WTC11 (cell line): ENCODE measurements at regions of chr14 and their contacts with region 1.

Region 1: GRCh38 chr14:100428727-100429126 is 105.6 kb downstream of the SLC25A47 start:
- DNase-seq: no peak
- ATAC-seq: no peak
- H3K4me3 Mint-ChIP-seq: no peak overlapping the region
- H3K27ac Mint-ChIP-seq: no peak overlapping the region
- H3K4me1 Mint-ChIP-seq: peaks cover 17% of the 10 kb centered on the region
- H3K27me3 Mint-ChIP-seq: no peaks in the 10 kb centered on the region
- CTCF ChIP-seq: no peak

Region 2: GRCh38 chr14:100187247-100187833 is 241.4 kb before region 1 on chr14:
- CTCF ChIA-PET with region 1: no interaction called
- POLR2A ChIA-PET with region 1: no interaction called
- DNase-seq: no peak
- ATAC-seq: peak; percentile 28; the same call in 1 of the 2 replicates
- H3K4me3 Mint-ChIP-seq: no peak overlapping the region
- H3K27ac Mint-ChIP-seq: no peak overlapping the region
- H3K4me1 Mint-ChIP-seq: no peaks in the 10 kb centered on the region
- H3K27me3 Mint-ChIP-seq: no peaks in the 10 kb centered on the region; the same call in 1 of the 2 replicates
- CTCF ChIP-seq: no peak

Region 3: DNA sequence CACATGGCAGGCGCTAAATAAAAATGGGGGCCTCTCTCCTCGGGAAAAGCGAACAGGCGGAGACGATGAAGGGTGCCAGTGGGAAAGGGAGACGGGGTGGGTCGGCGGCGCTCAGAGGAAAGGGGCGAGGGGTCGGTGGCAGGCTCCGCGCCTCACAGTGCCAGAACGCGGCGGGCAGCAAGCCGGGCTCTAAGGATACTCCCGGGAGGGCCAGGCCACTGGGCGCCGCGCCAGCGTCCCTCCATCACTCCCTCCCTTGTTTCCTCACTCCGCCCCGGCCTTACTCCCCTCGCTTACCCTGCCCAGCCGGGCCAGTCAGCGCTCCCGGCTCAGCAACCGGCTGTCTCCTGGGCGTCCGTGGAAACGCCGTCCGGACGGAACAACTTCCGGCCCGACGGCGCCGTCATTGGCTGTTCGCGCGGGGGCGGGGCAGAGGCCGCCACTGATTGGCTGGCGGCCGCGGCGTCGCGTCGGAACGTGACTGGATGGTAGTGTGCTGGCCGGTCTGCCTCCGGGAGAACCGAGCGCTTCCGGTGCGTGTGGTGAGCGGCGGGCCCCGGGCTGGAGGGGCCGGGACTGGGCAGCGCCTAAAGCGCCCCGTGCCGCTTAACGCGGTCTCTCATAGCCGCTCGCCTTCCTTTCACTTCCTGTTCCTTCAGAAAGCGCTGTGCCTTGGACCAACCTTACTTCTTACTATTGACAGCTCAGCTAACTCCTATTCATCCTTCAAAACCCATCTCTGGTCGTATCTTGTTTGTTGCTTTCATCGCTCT is 52.6 kb before region 1 on chr14:
- CTCF ChIA-PET with region 1: no interaction called
- POLR2A ChIA-PET with region 1: no interaction called
- DNase-seq: peak; percentile 94
- ATAC-seq: peak; percentile 88
- H3K4me3 Mint-ChIP-seq: peak within 1 kb of the TSS; percentile 96
- H3K27ac Mint-ChIP-seq: peak within 1 kb of the TSS; percentile 98
- H3K4me1 Mint-ChIP-seq: peaks cover 51% of the 10 kb centered on the region
- H3K27me3 Mint-ChIP-seq: no peaks in the 10 kb centered on the region
- CTCF ChIP-seq: no peak

Region 4: GRCh38 chr14:100440187-100440631 is 11.5 kb after region 1 on chr14:
- CTCF ChIA-PET with region 1: interaction called, 19 read pairs
- POLR2A ChIA-PET with region 1: no interaction called
- DNase-seq: peak; percentile 72
- ATAC-seq: peak; percentile 83
- H3K4me3 Mint-ChIP-seq: no peak overlapping the region
- H3K27ac Mint-ChIP-seq: 0 out of 2 replicates have a peak overlapping the region, but pooled peaks have one; percentile 43
- H3K4me1 Mint-ChIP-seq: peaks cover 33% of the 10 kb centered on the region
- H3K27me3 Mint-ChIP-seq: no peaks in the 10 kb centered on the region
- CTCF ChIP-seq: no peak